ENCODE measurements at regions of chr4 and their contacts with region 1.

Region 1: DNA sequence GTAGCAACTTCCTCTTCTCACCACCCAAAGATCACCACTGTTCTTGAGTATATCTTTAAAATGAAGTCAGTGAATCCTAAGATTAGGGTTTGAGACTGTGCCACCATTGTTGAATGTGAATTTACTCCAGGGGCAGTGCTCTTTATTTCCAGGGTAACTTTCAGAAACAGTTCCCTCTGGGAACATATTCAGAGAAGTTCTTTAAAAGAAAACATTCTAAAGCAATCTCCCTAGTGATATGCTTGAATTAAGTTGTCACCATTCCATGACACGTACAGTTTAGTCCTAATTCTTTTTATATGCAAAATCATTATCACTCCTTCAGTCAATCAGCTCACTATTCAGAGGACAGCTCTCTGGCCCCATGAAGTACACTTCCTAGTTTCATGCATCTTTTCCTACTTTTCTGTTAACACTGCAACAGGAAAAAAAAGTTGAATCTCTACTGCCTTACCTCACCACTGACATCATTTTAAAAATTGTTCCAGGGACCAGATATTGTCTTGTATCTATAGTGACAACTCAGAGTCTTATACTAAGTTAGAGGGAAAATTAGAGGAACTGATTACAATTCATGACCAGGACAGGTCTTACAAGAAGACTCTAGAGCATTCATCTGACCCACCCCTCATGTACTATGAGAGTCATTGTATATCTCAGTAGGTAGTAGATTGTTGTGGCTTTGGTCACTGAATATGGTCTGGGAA is 49.8 kb downstream of the PARM1 start:
- DNase-seq: no peak
- H3K4me3 ChIP-seq: no peak overlapping the region
- H3K27ac ChIP-seq: no peak overlapping the region
- H3K4me1 ChIP-seq: no peaks in the 10 kb centered on the region
- H3K27me3 ChIP-seq: no peaks in the 10 kb centered on the region
- CTCF ChIP-seq: no peak
- EP300 ChIP-seq: no peak
- POLR2A ChIP-seq: no peak
- RAD21 ChIP-seq: no peak

Region 2: DNA sequence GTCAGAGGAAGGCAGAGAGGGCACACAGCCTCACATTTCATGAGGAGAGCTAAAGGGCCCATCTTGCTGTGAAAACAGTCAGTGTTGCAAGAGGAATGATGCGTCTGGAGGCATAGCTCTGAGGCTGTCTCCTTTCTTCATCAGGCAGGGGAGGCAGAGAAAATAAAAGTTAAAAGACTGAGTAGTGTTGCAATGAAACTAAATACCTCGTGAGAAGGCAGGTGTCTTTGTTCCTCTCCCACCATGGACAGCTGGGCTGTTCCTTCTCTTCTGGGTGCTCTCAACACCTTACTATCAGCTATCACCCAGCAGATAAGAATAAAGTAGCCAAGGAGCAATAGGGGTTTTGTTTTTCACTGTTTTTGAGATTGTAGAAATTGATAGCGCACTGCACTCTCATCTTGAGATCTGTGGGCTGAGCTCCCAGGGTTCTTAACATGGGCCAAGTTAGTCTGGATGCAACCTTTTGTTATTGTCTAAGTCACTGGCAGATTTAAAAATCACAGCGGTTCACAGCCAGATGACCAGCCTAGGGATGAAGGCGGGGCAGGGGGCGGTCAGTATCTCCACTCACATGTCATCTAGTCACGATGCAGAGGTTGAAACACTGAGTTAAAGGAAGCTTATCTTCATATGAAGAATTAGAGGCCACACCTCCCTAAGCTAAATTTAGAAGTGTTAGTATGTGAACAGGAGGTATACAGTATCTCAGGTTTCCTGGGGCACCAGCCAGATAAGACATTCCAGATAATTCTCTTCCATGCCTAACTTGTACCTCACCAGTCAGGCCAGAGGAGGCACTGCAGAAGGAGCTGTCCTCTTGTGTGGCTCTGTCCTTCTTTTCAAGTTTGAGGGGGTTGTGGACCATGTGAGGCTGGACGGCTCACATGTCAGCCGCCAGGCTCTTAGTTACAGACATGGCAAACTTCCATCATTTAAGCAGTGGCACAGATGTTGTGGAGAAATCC is 12.9 kb before region 1 on chr4:
- CTCF ChIA-PET with region 1: interaction called, 20 read pairs
- POLR2A ChIA-PET with region 1: no interaction called
- DNase-seq: peak in 1 of 2 experiments; percentile 46
- H3K4me3 ChIP-seq: no peak overlapping the region
- H3K27ac ChIP-seq: no peak overlapping the region
- H3K4me1 ChIP-seq: no peaks in the 10 kb centered on the region
- H3K27me3 ChIP-seq: no peaks in the 10 kb centered on the region
- CTCF ChIP-seq: peak; percentile 28 to 70 (median 52); a peak in 3 of 4 replicates
- EP300 ChIP-seq: no peak
- POLR2A ChIP-seq: no peak
- RAD21 ChIP-seq: peak; percentile 35 to 46; a peak in 3 of 4 replicates